Endothelial cell of umbilical vein (primary cell): ENCODE measurements at regions of chr12 and their contacts with region 1.

Region 1: DNA sequence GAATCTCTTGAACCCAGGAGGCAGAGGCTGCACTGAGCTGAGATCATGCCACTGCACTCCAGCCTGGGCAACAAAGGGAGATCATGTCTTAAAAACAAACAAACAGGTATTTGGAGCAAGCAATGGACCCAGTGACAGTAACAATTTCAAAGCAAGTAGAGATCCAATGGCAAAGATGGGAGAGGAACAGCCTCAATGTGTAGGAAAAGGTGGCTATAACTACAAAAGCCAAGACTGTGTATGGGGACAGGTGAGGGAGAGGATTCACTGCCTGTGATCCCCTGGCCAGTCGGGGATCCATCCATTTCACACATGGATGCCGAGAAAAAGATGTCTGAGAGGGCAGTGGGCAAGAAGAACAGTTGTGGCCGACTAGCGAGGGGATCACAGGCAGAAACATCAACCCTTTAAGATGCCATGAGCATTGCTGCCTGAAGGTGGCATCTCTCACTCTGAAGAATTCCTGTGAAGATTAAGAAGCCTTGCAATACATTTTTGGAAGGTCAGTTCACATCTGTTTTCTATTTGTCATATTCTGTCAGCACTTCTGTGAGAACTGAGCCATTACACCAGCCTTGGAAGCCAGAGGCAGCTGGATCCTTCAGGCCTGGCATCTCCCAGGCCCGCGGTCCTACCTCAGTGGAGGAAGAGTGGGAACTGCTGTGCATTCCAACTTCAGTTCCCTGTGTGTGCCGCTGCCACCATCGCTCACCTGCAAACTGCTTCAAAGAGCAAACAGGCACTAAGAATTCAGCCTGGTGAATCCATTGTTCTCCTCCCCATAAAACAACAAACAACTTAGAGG is 54.5 kb upstream of the FRS2 start:
- DNase-seq: peak; percentile 70
- H3K4me3 ChIP-seq: no peak overlapping the region
- H3K27ac ChIP-seq: no peak overlapping the region
- H3K4me1 ChIP-seq: no peaks in the 10 kb centered on the region
- H3K27me3 ChIP-seq: no peaks in the 10 kb centered on the region
- CTCF ChIP-seq: peak; percentile 66 to 71
- POLR2A ChIP-seq: no peak

Region 2: DNA sequence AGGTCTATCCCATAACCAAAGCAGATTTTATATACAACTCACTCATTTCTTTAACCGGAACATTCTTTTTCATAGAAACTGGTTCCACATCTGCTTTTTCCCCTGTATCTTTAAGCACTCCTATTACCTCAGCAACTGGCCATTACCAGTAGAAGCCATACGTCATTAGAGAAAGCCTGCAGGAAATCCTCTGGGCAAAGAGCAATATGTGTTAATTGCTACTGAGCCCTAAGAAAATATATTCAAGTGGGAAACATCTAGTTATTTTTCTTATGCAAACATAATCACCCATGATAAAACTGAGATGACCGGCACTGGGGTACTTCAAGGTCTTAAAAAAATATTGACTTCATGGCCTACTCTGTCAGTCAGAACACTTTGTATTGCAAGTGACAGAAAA is 204.5 kb before region 1 on chr12:
- CTCF ChIA-PET with region 1: no interaction called
- POLR2A ChIA-PET with region 1: no interaction called
- dilution Hi-C with region 1: no loop called
- intact Hi-C with region 1: no loop called
- DNase-seq: no peak
- H3K4me3 ChIP-seq: no peak overlapping the region
- H3K27ac ChIP-seq: no peak overlapping the region
- H3K4me1 ChIP-seq: no peaks in the 10 kb centered on the region
- H3K27me3 ChIP-seq: peaks cover 2% of the 10 kb centered on the region in 2 experiments
- CTCF ChIP-seq: no peak
- POLR2A ChIP-seq: no peak

Region 3: GRCh38 chr12:69388371-69388770 is 27.3 kb before region 1 on chr12:
- CTCF ChIA-PET with region 1: no interaction called
- POLR2A ChIA-PET with region 1: no interaction called
- dilution Hi-C with region 1: no loop called
- intact Hi-C with region 1: loop called (anchors 1 kb)
- DNase-seq: peak; percentile 79
- H3K4me3 ChIP-seq: no peak overlapping the region
- H3K27ac ChIP-seq: no peak overlapping the region
- H3K4me1 ChIP-seq: peaks cover 6% of the 10 kb centered on the region
- H3K27me3 ChIP-seq: no peaks in the 10 kb centered on the region
- CTCF ChIP-seq: peak; percentile 37 to 41
- POLR2A ChIP-seq: no peak

Region 4: DNA sequence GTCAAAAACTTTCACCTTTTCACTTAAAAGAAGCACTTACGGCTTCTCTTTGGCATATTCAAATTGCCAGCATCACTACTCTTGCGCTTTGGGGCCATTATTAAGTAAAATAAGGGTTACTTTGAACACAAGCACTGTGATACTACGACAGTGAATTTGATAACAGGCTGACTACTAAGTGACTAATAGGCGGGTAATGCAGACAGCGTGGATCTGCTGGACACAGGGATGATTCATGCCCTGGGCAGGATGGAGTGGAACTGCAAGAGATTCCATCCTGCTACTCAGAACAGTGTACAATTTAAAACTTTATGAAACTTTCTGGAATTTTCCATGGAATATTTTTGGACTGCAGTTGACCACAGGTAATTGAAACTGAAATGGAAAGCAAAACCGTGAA is 10.2 kb before region 1 on chr12:
- CTCF ChIA-PET with region 1: no interaction called
- POLR2A ChIA-PET with region 1: no interaction called
- dilution Hi-C with region 1: no loop called
- intact Hi-C with region 1: loop called (anchors 1 kb)
- DNase-seq: peak; percentile 92
- H3K4me3 ChIP-seq: no peak overlapping the region
- H3K27ac ChIP-seq: peak overlapping the region; percentile 97
- H3K4me1 ChIP-seq: peaks cover 19% of the 10 kb centered on the region
- H3K27me3 ChIP-seq: no peaks in the 10 kb centered on the region
- CTCF ChIP-seq: no peak
- POLR2A ChIP-seq: no peak

Region 5: GRCh38 chr12:69464428-69464827 is 48.8 kb after region 1 on chr12:
- CTCF ChIA-PET with region 1: interaction called, 5 read pairs
- POLR2A ChIA-PET with region 1: no interaction called
- dilution Hi-C with region 1: no loop called
- intact Hi-C with region 1: loop called (anchors 5 kb)
- DNase-seq: no peak
- H3K4me3 ChIP-seq: no peak overlapping the region
- H3K27ac ChIP-seq: no peak overlapping the region
- H3K4me1 ChIP-seq: no peaks in the 10 kb centered on the region
- H3K27me3 ChIP-seq: no peaks in the 10 kb centered on the region
- CTCF ChIP-seq: no peak
- POLR2A ChIP-seq: no peak

Region 6: DNA sequence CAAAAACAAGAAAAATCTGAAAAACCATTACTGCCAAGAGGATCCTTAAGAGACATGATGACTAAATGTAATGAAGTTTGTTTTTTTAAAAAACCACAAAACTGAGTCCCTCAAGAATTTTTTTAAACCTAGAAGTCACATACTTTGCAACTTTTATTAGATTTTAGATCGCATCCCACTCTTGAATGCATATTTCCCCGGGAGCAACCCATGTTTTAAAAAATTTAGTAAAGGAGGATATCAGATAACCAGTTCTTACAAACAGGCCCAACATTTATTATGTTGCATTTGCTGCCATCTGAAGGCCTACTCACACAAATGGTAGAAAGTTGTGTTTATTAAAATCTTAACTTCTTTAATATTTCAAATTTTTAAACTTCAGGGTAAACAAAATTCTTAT is 125.3 kb after region 1 on chr12:
- CTCF ChIA-PET with region 1: no interaction called
- POLR2A ChIA-PET with region 1: no interaction called
- dilution Hi-C with region 1: no loop called
- intact Hi-C with region 1: no loop called
- DNase-seq: no peak
- H3K4me3 ChIP-seq: no peak overlapping the region
- H3K27ac ChIP-seq: no peak overlapping the region
- H3K4me1 ChIP-seq: no peaks in the 10 kb centered on the region
- H3K27me3 ChIP-seq: no peaks in the 10 kb centered on the region
- CTCF ChIP-seq: no peak
- POLR2A ChIP-seq: no peak